Breast epithelium (tissue), 4 donors: ENCODE measurements at regions of chr16 and their contacts with region 1.

Region 1: GRCh38 chr16:70759666-70760065 is 41.3 kb downstream of the VAC14 start:
- DNase-seq: no peak
- H3K4me3 ChIP-seq: no peak overlapping the region
- H3K27ac ChIP-seq: peak overlapping the region in 1 of 2 donors; percentile 84
- H3K4me1 ChIP-seq: no peaks in the 10 kb centered on the region
- H3K27me3 ChIP-seq: no peaks in the 10 kb centered on the region
- CTCF ChIP-seq: no peak
- POLR2A ChIP-seq: no peak

Region 2: GRCh38 chr16:69310653-69311532 is 1448.8 kb before region 1 on chr16 and contains the start of gene VPS4A:
- intact Hi-C with region 1: no loop called
- DNase-seq: peak; percentile 94 to 95
- H3K4me3 ChIP-seq: peak within 1 kb of the TSS; percentile 94 to 97 (median 94)
- H3K27ac ChIP-seq: peak within 1 kb of the TSS; percentile 87 to 90
- H3K4me1 ChIP-seq: no peaks in the 10 kb centered on the region
- H3K27me3 ChIP-seq: no peaks in the 10 kb centered on the region
- CTCF ChIP-seq: peak; percentile 42 to 92 (median 54)
- POLR2A ChIP-seq: no peak
- total RNA-seq, gene VPS4A: 31.3 to 43.8 (median 32.4) TPM

Region 3: DNA sequence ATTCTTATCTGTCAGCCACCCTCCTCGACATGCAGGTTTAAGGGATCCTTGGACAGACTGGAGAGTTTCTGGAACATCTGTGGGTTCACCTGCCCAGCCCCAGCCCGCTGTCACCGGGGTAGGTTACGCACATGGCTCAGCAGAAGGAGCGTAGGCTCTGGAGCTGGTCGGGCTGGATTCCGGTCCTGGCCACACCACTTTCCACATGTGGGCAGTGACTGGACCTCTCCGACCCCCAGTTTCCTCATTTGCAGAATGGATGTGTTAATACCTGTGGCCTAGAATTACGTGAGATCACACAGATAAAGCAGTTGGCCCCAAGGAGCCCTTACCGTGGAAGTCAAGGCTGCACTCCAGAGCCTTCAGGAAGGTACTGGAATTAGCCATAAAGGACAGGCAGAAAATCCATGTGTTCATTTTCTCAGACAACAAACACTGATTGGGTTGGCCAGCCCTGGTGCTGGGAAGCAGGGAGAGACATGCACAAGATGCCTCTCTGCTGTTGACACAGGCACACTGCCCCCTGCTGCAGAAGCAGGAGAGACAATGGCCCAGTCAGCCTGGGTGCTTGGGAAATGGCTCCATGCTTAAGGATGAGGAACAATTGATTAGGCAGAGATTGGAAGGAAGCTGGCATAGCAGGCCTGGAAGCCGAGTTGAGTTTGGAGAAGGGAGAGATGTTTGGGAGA is 177.2 kb before region 1 on chr16:
- intact Hi-C with region 1: no loop called
- DNase-seq: peak in 1 of 2 donors; percentile 62
- H3K4me3 ChIP-seq: peak overlapping the region in 1 of 3 donors; percentile 0
- H3K27ac ChIP-seq: peak overlapping the region; percentile 68 to 69
- H3K4me1 ChIP-seq: no peaks in the 10 kb centered on the region
- H3K27me3 ChIP-seq: no peaks in the 10 kb centered on the region
- CTCF ChIP-seq: peak in 1 of 3 donors; percentile 12
- POLR2A ChIP-seq: no peak

Region 4: DNA sequence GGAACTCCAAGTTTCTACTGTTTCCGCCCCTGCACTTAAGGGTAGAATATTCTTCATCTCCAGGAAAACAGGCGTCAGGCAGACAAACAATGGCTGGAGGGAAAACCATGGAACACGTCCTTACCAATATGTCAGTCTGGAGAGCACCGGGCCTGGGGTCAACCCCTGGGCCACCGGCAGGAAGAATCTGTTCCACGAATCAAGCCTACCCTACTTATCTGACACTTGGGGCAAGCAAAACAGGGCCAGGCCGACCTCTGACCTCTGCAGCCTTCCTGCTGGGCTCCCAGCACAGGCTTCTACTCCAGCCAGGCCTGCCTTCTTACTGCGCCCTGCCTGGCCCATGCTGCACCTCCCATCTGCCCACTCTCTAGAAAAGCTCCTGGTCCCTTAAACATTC is 31.1 kb after region 1 on chr16:
- intact Hi-C with region 1: loop called (anchors 1 kb)
- DNase-seq: no peak
- H3K4me3 ChIP-seq: no peak overlapping the region
- H3K27ac ChIP-seq: no peak overlapping the region
- H3K4me1 ChIP-seq: no peaks in the 10 kb centered on the region
- H3K27me3 ChIP-seq: no peaks in the 10 kb centered on the region
- CTCF ChIP-seq: no peak
- POLR2A ChIP-seq: no peak